Activated CD8-positive, alpha-beta T cell treated with anti-CD3 and anti-CD28 coated beads, Interleukin-2, amount 10 ng/mL, durations not matched to agents 7 days and 5 days (primary cell): ENCODE measurements at regions of chr4 and their contacts with region 1.

Region 1: GRCh38 chr4:123396307-123397143 is at the start of gene SPRY1:
- DNase-seq: peak; percentile 95
- ATAC-seq: peak; percentile 57
- H3K4me3 Mint-ChIP-seq: peak within 1 kb of the TSS; percentile 94
- H3K27ac Mint-ChIP-seq: peak within 1 kb of the TSS; percentile 91
- H3K4me1 Mint-ChIP-seq: peaks cover 20% of the 10 kb centered on the region
- H3K27me3 Mint-ChIP-seq: no peaks in the 10 kb centered on the region
- total RNA-seq, gene SPRY1: 50.7 to 53.2 TPM

Region 2: DNA sequence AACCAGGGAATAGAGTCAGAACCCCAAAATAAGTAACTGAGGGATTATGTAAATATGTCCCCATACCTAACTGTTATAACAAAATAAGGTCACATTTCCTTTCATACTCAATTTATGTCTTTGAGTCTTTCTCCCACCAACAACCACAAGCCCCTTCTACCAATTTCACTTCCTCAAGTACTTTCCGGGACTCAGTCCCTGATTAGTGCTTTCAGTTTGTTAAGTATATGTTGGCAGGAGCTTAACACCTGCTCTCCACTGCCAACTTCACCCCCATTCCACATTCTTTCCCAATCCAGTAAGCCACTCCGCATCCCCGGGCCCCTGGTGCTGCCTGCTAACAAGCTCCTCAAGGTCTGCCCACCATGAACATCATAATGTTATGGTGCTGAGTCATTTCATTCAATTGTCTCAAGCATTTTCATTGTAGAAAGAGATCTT is 71.3 kb before region 1 on chr4:
- CTCF ChIA-PET with region 1: no interaction called
- POLR2A ChIA-PET with region 1: no interaction called
- DNase-seq: no peak
- ATAC-seq: no peak
- H3K4me3 Mint-ChIP-seq: no peak overlapping the region
- H3K27ac Mint-ChIP-seq: no peak overlapping the region
- H3K4me1 Mint-ChIP-seq: peaks cover 5% of the 10 kb centered on the region
- H3K27me3 Mint-ChIP-seq: peaks cover 5% of the 10 kb centered on the region

Region 3: GRCh38 chr4:123412091-123412505 is 15.6 kb after region 1 on chr4:
- CTCF ChIA-PET with region 1: interaction called, 69 read pairs
- POLR2A ChIA-PET with region 1: interaction called, 45 read pairs
- DNase-seq: no peak
- ATAC-seq: peak; percentile 45
- H3K4me3 Mint-ChIP-seq: peak overlapping the region; percentile 62
- H3K27ac Mint-ChIP-seq: peak overlapping the region; percentile 84
- H3K4me1 Mint-ChIP-seq: peaks cover 56% of the 10 kb centered on the region
- H3K27me3 Mint-ChIP-seq: no peaks in the 10 kb centered on the region

Region 4: DNA sequence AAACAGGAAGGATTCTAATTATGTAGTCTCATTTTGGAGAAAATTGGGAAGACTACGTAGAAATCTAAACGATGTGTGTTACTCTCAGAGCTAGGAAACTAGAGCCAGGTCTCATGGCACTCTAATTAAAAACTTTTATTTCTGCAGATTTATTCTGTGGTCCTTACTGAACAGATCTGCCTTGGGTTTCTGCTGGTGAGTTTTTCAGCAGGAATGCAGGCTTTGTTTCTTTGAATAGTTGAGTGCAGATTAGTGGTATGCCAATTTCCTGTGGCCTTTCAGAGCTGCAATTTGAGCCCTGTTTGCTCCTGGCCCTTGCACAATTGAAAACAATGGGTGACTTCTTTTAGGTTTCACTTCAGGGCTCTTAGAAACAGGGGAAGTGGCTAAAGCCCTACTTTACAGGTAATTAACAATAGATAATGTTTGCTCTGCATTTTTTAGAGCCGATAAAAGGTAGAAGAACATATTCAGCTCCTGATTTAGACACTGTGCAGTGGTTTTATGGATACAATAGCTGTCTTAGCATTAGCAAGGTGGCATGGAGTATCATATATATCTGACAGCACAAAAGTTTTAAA is 21.9 kb after region 1 on chr4:
- CTCF ChIA-PET with region 1: interaction called, 69 read pairs
- POLR2A ChIA-PET with region 1: interaction called, 45 read pairs
- DNase-seq: peak; percentile 59
- ATAC-seq: peak; percentile 30
- H3K4me3 Mint-ChIP-seq: peak overlapping the region; percentile 47
- H3K27ac Mint-ChIP-seq: peak overlapping the region; percentile 92
- H3K4me1 Mint-ChIP-seq: peaks cover 89% of the 10 kb centered on the region
- H3K27me3 Mint-ChIP-seq: no peaks in the 10 kb centered on the region

Region 5: GRCh38 chr4:123444290-123444731 is 47.8 kb after region 1 on chr4:
- CTCF ChIA-PET with region 1: interaction called, 16 read pairs
- POLR2A ChIA-PET with region 1: interaction called, 17 read pairs
- DNase-seq: peak; percentile 78
- ATAC-seq: peak; percentile 85
- H3K4me3 Mint-ChIP-seq: peak overlapping the region; percentile 76
- H3K27ac Mint-ChIP-seq: peak overlapping the region; percentile 94
- H3K4me1 Mint-ChIP-seq: peaks cover 46% of the 10 kb centered on the region
- H3K27me3 Mint-ChIP-seq: no peaks in the 10 kb centered on the region

Region 6: GRCh38 chr4:123449780-123450179 is 53.3 kb after region 1 on chr4:
- CTCF ChIA-PET with region 1: interaction called, 10 read pairs
- POLR2A ChIA-PET with region 1: interaction called, 17 read pairs
- DNase-seq: no peak
- ATAC-seq: peak; percentile 59
- H3K4me3 Mint-ChIP-seq: peak overlapping the region; percentile 47
- H3K27ac Mint-ChIP-seq: peak overlapping the region; percentile 43
- H3K4me1 Mint-ChIP-seq: peaks cover 60% of the 10 kb centered on the region
- H3K27me3 Mint-ChIP-seq: no peaks in the 10 kb centered on the region

Region 7: DNA sequence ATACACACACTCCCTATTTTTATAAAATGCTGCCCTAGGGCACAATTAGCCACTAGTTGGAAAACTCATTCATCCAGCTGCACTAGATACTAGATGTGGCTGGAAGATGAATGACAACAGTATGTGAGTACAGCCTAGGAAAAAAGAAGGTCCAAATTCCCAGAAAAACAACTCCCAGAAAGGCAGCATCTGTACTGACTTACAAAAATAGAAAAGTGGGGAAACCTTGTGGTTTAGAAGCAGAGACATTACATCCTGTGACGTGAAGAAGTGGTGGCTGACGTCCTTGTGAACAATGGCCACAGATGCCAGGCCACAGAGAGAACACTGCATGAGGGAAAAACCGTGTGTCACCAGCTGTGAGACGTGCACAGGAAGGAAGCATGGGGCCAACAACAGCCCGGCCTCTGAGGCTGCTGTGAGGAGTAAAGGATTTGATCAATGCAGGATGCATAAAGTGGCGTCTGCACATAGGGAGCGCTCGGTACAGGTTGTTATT is 81.2 kb after region 1 on chr4:
- CTCF ChIA-PET with region 1: interaction called, 11 read pairs
- POLR2A ChIA-PET with region 1: interaction called, 9 read pairs
- DNase-seq: peak; percentile 91
- ATAC-seq: peak; percentile 94
- H3K4me3 Mint-ChIP-seq: peak overlapping the region; percentile 44
- H3K27ac Mint-ChIP-seq: peak overlapping the region; percentile 86
- H3K4me1 Mint-ChIP-seq: peaks cover 43% of the 10 kb centered on the region
- H3K27me3 Mint-ChIP-seq: no peaks in the 10 kb centered on the region

Region 8: DNA sequence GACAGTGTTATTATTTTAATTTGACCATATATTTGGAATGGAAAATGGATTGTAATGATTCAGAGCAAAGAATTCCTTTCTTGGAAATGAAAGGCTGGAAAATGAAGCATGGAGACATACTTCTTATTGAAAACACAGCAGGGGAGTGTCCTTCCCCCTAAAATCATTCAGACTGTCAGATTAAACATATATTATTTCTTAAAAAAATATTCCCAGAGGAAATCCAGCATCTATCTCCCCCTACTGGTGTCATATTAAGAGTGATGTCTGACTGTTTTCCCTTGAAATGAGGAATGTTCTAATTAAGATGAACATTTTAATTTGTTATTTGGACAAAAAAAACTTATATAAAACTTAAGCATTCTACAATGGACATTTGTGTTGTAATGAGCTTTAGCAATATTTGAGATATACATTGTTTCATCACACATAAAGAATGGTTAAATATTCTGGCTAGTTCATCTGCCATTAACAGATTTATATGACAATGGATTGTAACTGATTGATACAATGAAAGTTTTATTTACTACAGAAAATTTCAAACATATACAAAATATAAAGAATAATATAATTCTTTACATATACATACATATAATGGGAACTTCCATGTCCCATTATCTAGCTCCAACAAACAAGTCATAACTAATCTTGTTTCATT is 264.7 kb after region 1 on chr4:
- CTCF ChIA-PET with region 1: interaction called, 16 read pairs
- POLR2A ChIA-PET with region 1: interaction called, 3 read pairs
- DNase-seq: no peak
- ATAC-seq: no peak
- H3K4me3 Mint-ChIP-seq: no peak overlapping the region
- H3K27ac Mint-ChIP-seq: no peak overlapping the region
- H3K4me1 Mint-ChIP-seq: peaks cover 24% of the 10 kb centered on the region
- H3K27me3 Mint-ChIP-seq: peaks cover 13% of the 10 kb centered on the region